HepG2 (cell line): ENCODE measurements at regions of chr6 and their contacts with region 1.

Region 1: GRCh38 chr6:31834434-31835198 is 7.1 kb downstream of the HSPA1B start:
- DNase-seq: peak; percentile 92
- ATAC-seq: peak; percentile 85
- H3K4me3 ChIP-seq: peak overlapping the region; percentile 75 to 98 (median 93)
- H3K27ac ChIP-seq: peak overlapping the region; percentile 93
- H3K4me1 ChIP-seq: peaks cover 56% of the 10 kb centered on the region
- H3K27me3 ChIP-seq: peaks cover 0 to 2% of the 10 kb centered on the region in 2 experiments; a peak in 1 of 5 replicates
- CTCF ChIP-seq: no peak
- EP300 ChIP-seq: no peak
- POLR2A ChIP-seq: peak; percentile 97 to 99
- RAD21 ChIP-seq: peak; percentile 28; the same call in 1 of the 2 replicates

Region 2: DNA sequence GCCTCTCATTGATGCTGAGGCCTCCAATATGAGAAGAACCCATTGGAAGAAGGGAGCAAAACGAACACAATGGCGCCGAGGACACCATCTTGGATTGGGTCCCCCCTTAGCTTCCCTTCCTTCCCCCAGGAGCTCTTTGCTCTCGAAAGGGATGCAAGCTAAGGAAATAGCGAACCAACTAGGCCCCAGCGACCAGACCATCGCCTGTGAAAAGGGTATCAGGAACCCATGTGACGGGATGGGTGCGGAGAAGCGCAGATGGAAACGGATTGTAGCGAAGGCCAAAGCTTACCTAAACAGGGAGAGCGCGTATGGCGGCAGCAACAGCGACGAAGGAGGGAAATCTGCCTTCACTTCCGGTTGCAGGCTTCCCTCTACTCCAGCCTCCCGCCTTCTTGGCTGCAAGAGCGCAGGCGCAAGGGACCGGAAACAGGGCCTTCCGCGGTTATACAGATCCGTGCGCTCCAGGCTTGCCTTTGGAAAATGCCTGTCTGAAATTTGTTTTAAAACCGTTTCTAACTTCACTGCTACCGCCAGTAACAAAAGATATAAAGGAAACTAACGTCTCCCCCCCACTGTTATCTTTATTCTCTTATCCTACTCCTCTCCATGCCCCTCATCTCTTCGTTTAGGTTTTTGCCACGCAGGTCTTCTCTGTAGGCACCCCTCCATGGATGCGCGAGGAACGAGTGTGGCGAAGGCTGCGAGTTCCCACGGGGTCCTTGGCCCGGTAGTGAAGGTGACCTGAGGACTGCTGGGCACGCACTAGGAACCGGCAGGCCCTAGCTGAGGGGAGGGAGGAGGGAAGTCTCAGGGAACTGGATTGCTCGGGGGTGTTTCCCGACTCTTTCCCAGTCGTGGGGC is 292.7 kb before region 1 on chr6 and contains the start of gene DDX39B:
- CTCF ChIA-PET with region 1: no interaction called
- POLR2A ChIA-PET with region 1: interaction called, 3 read pairs
- in situ Hi-C with region 1: no loop called
- intact Hi-C with region 1: loop called (anchors 1 kb)
- DNase-seq: peak; percentile 98
- ATAC-seq: peak; percentile 85
- H3K4me3 ChIP-seq: peak within 1 kb of the TSS; percentile 66 to 99 (median 83)
- H3K27ac ChIP-seq: peak within 1 kb of the TSS; percentile 95
- H3K4me1 ChIP-seq: peaks cover 59% of the 10 kb centered on the region
- H3K27me3 ChIP-seq: no peaks in the 10 kb centered on the region; a peak in 2 of 5 replicates
- CTCF ChIP-seq: peak; percentile 39
- EP300 ChIP-seq: peak; percentile 33 to 60; a peak in 2 of 4 replicates
- POLR2A ChIP-seq: peak; percentile 98 to 99
- RAD21 ChIP-seq: peak; percentile 37; the same call in 1 of the 2 replicates
- total RNA-seq, gene DDX39B: 570 and 737 TPM in 2 replicates

Region 3: GRCh38 chr6:31702819-31703522 is 131.6 kb before region 1 on chr6 and contains the start of gene ABHD16A:
- CTCF ChIA-PET with region 1: no interaction called
- POLR2A ChIA-PET with region 1: interaction called, 13 read pairs
- in situ Hi-C with region 1: no loop called
- intact Hi-C with region 1: no loop called
- DNase-seq: peak; percentile 98
- ATAC-seq: peak; percentile 93
- H3K4me3 ChIP-seq: peak within 1 kb of the TSS; percentile 71 to 84 (median 81)
- H3K27ac ChIP-seq: peak within 1 kb of the TSS; percentile 85
- H3K4me1 ChIP-seq: peaks cover 39% of the 10 kb centered on the region
- H3K27me3 ChIP-seq: peaks cover 0 to 3% of the 10 kb centered on the region in 2 experiments; a peak in 2 of 5 replicates
- CTCF ChIP-seq: peak; percentile 33
- EP300 ChIP-seq: peak; percentile 56 to 79; a peak in 3 of 4 replicates
- POLR2A ChIP-seq: peak; percentile 93 to 96
- RAD21 ChIP-seq: no peak
- total RNA-seq, gene ABHD16A: 16.2 and 43.5 TPM in 2 replicates

Region 4: DNA sequence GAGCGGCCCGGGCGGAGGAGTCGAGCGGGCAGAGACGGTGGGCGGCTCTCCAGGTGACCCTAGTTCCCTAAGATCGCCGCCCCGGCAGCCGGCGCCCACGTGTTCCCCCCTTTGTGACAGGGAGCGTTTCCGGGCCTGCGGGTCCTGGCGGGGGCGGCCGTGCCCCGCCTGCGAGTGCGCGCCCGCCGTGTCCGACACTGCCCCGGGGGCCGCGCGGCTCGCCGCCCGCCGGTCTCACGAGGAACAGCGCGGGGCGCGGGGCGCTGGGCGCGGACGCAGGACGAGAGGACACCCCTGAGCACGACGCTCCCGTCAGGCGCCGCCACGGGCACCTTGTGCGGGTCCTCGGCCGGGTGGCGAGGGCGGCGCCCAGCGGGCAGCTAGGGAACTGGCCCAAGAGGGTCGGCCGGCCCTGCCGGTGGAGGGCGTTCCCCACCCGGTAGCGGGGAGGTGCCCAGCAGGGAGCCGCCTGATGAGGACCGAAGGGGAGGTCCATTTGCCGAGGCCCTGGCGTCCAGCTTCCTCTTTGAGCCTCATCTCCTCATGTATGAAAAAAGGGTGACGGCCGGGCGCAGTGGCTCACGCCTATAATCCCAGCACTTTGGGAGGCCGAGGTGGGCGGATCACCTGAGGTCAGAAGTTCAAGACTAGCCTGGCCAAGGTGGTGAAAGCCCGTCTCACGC is 38.9 kb before region 1 on chr6 and contains the start of gene VARS1:
- CTCF ChIA-PET with region 1: interaction called, 10 read pairs
- POLR2A ChIA-PET with region 1: interaction called, 14 read pairs
- in situ Hi-C with region 1: no loop called
- intact Hi-C with region 1: loop called (anchors 1 kb)
- DNase-seq: peak; percentile 90
- ATAC-seq: peak; percentile 89
- H3K4me3 ChIP-seq: peak within 1 kb of the TSS; percentile 89 to 98 (median 98)
- H3K27ac ChIP-seq: peak within 1 kb of the TSS; percentile 76
- H3K4me1 ChIP-seq: peaks cover 25% of the 10 kb centered on the region
- H3K27me3 ChIP-seq: no peaks in the 10 kb centered on the region; a peak in 1 of 5 replicates
- CTCF ChIP-seq: peak; percentile 98
- EP300 ChIP-seq: no peak
- POLR2A ChIP-seq: peak in 1 of 2 experiments; percentile 46; a peak in 1 of 4 replicates
- RAD21 ChIP-seq: peak; percentile 97
- total RNA-seq, gene VARS1: 56.1 and 59.2 TPM in 2 replicates

Region 5: DNA sequence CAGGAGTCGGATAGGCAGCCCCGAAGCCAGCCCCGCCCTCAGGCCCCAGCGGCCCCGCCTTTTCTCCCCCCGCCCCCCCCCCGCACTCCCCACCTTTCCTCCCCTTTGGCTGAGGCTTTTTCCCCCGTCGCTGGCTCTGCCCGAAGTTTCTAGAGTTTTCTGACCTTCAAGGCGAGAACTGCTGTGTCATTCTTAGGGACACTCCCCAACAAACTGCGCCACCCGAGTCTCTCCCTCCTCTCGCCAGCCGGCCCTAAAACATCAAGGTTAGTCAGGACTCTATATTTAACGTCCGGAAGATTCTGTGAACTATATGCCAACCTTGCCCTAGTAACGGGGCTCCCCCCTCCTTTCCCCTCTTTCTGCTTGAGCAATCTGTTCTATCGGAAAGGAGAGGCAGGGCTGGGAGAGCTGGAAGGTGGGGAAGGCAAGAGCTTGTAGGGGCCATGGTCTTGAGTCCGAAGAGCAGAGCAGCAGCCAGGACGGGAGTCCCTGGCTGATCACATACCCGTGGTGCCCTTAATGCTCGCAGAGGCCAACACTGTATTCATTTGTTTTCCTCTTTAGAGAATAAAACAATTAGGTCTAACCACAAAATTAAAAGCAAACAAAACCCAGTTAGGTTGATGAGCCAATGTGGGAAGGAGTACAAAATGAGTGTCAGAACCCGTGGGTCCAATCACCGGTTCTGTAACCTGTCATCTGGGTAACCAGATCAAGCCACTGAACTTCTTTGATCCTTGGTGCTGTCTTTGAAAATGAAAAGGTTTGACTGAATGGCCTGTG is 12.4 kb before region 1 on chr6:
- CTCF ChIA-PET with region 1: no interaction called
- POLR2A ChIA-PET with region 1: interaction called, 22 read pairs
- in situ Hi-C with region 1: no loop called
- intact Hi-C with region 1: no loop called
- DNase-seq: peak; percentile 67
- ATAC-seq: peak; percentile 47
- H3K4me3 ChIP-seq: peak overlapping the region; percentile 67 to 91 (median 87)
- H3K27ac ChIP-seq: peak overlapping the region; percentile 86
- H3K4me1 ChIP-seq: peaks cover 67% of the 10 kb centered on the region
- H3K27me3 ChIP-seq: no peaks in the 10 kb centered on the region
- CTCF ChIP-seq: 0 out of 2 replicates have a peak, but pooled peaks have one; percentile 13
- EP300 ChIP-seq: peak in 1 of 2 experiments; percentile 65; a peak in 2 of 4 replicates
- POLR2A ChIP-seq: peak in 1 of 2 experiments; percentile 33; a peak in 2 of 4 replicates
- RAD21 ChIP-seq: no peak

Region 6: GRCh38 chr6:31915748-31916145 is 81.1 kb after region 1 on chr6:
- CTCF ChIA-PET with region 1: no interaction called
- POLR2A ChIA-PET with region 1: no interaction called
- in situ Hi-C with region 1: no loop called
- intact Hi-C with region 1: no loop called
- DNase-seq: no peak
- ATAC-seq: peak; percentile 37
- H3K4me3 ChIP-seq: no peak overlapping the region
- H3K27ac ChIP-seq: no peak overlapping the region
- H3K4me1 ChIP-seq: peaks cover 26% of the 10 kb centered on the region
- H3K27me3 ChIP-seq: no peaks in the 10 kb centered on the region; a peak in 1 of 5 replicates
- CTCF ChIP-seq: no peak
- EP300 ChIP-seq: no peak
- POLR2A ChIP-seq: no peak
- RAD21 ChIP-seq: no peak

Region 7: DNA sequence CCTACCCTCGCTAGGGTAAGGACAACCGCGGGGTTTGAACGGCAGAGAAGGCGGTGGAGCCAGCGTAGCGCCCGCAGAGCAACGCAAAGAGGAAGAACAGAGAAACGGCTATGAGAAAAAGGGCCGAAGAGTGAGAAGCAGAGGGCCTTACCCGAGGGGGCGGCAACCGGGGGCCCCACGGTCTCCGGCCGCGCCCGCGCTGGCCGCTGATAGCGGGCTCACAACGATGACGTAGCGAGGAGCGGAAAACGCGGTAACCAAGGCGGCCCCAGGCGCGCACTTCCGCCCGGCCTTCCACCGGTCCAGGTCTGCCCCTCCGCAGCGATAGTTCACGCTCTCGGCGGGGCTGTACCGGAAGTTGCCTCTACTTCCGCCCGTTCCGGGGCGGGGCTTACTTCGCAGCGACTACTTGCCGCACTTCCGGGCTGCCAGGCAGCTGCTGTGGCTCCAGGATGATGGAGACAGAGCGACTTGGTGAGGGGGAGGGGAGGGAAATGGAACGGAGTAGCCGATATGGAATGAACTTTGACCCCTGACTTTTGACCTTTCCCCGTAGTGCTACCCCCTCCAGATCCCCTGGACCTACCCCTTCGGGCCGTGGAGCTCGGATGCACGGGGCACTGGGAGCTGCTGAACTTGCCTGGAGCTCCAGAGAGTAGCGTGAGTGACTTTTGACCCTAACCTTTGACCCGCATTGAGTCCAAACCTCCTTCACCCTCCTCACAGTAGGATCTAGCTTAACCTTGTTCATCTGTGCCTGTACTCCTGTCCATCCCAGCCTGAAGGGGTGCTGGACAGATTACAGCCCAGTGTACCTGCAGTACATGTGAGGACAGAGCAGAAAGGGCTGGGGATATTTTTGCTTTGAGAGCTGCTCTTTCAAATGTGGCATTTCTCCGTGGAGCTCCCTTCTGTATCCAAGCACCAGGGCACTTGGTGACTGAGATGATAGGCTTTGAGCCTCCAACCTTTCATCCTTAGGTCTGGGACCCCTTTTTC is 124.4 kb after region 1 on chr6 and contains the starts of genes NELFE and SKIC2:
- CTCF ChIA-PET with region 1: no interaction called
- POLR2A ChIA-PET with region 1: interaction called, 3 read pairs
- in situ Hi-C with region 1: no loop called
- intact Hi-C with region 1: loop called (anchors 10 kb)
- DNase-seq: peak; percentile 97
- ATAC-seq: peak; percentile 97
- H3K4me3 ChIP-seq: peak within 1 kb of the TSS; percentile 81 to 98 (median 95)
- H3K27ac ChIP-seq: peak within 1 kb of the TSS; percentile 75
- H3K4me1 ChIP-seq: peaks cover 31% of the 10 kb centered on the region
- H3K27me3 ChIP-seq: no peaks in the 10 kb centered on the region; a peak in 1 of 5 replicates
- CTCF ChIP-seq: no peak
- EP300 ChIP-seq: peak; percentile 23 to 56; a peak in 2 of 4 replicates
- POLR2A ChIP-seq: peak; percentile 70 to 73
- RAD21 ChIP-seq: peak; percentile 64
- total RNA-seq, gene NELFE: 69.8 and 80.4 TPM in 2 replicates
- total RNA-seq, gene SKIC2: 59.7 and 67.1 TPM in 2 replicates